ENCODE measurements at regions of chr2 and their contacts with region 1.

Region 1: DNA sequence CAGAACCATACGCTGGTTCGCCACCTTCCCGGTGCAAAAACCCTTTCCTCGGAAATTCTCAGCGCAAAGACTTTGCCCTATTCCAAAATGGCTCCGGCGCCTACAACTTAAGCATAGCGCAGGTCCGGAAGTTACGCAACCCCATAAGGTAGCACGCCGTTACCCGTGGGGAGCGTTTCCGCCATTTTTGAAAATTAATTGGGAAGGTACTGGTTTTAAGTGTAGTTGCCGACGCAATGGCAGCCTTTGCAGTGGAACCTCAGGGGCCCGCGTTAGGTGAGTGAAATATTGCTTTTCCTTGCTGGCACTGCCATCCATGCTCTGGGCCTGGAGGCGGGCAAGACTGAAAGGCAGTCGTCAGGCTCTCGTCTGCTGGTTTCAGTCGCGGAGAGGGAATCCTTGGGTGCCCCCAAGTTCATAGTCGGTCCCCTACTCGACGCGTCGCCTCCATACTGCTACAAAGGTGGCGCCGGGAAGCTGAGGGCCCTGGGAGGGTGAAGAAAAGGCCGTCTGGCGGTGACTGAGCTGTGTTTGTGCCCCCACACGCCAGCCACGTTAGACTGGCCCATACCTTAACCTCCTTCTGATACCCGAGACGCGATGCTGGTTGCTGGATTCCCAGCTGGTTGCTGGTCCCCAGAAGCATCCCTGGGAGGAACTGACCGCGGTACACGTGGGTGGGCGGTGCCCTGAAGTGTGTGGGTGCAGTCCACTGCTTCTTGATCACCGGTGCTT is at the start of gene NUP35:
- DNase-seq: peak; percentile 88
- ATAC-seq: peak; percentile 87
- H3K4me3 ChIP-seq: peak within 1 kb of the TSS; percentile 66 to 76
- H3K27ac ChIP-seq: peak within 1 kb of the TSS; percentile 96
- H3K4me1 ChIP-seq: peaks cover 7 to 19% of the 10 kb centered on the region in 2 experiments; a peak in 3 of 4 replicates
- H3K27me3 ChIP-seq: no peaks in the 10 kb centered on the region
- CTCF ChIP-seq: no peak
- POLR2A ChIP-seq: peak; percentile 59
- RAD21 ChIP-seq: no peak
- total RNA-seq, gene NUP35: 33.4 TPM

Region 2: DNA sequence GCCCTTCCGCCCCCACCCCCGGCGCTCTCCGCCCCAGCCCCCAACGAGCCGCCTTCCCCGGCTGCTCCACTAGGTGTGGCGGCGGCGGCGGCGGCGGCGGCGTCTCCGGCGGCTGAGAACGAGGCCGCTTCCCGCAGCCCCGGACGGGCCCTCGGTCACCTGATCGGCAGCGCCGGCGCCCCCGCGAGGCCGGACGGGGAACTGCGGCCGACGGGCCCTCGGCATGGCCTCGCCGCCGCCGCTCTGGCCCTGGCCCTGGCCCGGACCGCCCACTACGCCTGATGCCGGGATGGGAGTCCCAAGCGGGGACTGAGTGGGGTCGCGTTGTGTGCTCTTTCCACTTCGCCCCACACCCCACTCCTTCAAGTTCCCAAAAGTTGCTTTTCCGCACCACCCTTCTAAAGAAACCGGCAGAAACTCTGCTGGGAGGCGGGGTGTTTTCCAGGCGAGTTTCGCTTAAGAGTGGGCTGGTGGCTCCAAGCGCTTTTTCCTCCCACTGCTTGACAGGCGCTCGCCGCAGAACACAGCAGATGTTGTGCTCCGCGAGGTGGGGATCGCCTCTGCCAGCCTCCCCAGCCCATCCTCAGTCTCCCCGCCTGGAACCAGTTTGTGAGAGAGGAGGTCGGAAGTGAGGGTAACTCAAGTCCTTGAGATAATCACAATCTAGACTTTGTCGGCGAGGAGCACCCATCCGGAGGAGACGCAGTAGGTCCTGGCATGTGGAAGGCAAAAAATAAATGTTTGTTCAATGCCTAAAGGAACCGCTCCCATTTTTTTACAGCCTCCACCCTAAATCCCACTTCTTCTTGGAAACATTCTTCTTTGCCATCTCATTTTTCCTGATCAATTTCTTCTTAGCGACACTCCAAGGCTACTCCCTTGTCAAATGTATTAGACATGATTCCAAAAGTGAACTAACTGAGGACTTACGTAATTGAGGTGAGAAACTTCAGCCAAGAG is 85.8 kb before region 1 on chr2 and contains the start of gene NCKAP1:
- CTCF ChIA-PET with region 1: no interaction called
- POLR2A ChIA-PET with region 1: no interaction called
- RAD21 ChIA-PET with region 1: no interaction called
- intact Hi-C with region 1: loop called (anchors 5 kb)
- DNase-seq: peak; percentile 39
- ATAC-seq: peak; percentile 90
- H3K4me3 ChIP-seq: peak within 1 kb of the TSS; percentile 63 to 79
- H3K27ac ChIP-seq: peak within 1 kb of the TSS; percentile 88
- H3K4me1 ChIP-seq: peaks cover 7 to 21% of the 10 kb centered on the region in 2 experiments
- H3K27me3 ChIP-seq: no peaks in the 10 kb centered on the region
- CTCF ChIP-seq: peak in 2 of 3 experiments; percentile 64 to 69; a peak in 4 of 6 replicates
- POLR2A ChIP-seq: no peak
- RAD21 ChIP-seq: peak; percentile 9; the same call in 1 of the 2 replicates
- total RNA-seq, gene NCKAP1: 115 TPM

Measured in HCT116 (cell line).